Activated CD4-positive, alpha-beta T cell treated with anti-CD3 and anti-CD28 coated beads for 36 hours (primary cell): ENCODE measurements at regions of chr2 and their contacts with region 1.

Region 1: GRCh38 chr2:61775956-61776570 is 77.8 kb downstream of the FAM161A start:
- DNase-seq: no peak
- ATAC-seq: no peak
- H3K4me3 Mint-ChIP-seq: no peak overlapping the region
- H3K27ac Mint-ChIP-seq: no peak overlapping the region
- H3K4me1 Mint-ChIP-seq: no peaks in the 10 kb centered on the region
- H3K27me3 Mint-ChIP-seq: peaks cover 13% of the 10 kb centered on the region

Region 2: DNA sequence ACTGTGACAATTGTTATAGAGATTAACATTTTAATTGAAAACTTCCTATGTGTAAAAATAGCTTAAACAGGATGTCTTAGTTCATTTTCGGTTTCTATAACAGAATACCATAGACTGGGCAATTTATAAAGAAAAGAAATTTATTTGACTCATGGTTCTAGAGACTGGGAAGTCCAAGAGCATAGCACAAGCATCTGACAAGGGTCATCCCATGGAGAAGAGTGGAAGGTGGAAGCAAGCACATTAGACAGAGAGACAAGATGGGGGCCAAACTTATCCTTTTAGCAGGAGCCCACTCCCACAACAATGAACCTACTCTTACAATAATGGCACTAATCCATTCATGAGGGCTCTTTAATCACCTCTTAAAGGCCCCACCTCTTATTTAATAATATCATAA is 22.6 kb before region 1 on chr2:
- CTCF ChIA-PET with region 1: no interaction called
- POLR2A ChIA-PET with region 1: no interaction called
- intact Hi-C with region 1: loop called in 1 of 2 experiments (anchors 2 kb)
- DNase-seq: no peak
- ATAC-seq: no peak
- H3K4me3 Mint-ChIP-seq: no peak overlapping the region
- H3K27ac Mint-ChIP-seq: no peak overlapping the region
- H3K4me1 Mint-ChIP-seq: peaks cover 7% of the 10 kb centered on the region
- H3K27me3 Mint-ChIP-seq: no peaks in the 10 kb centered on the region